ENCODE measurements at regions of chr7 and their contacts with region 1.

Region 1: DNA sequence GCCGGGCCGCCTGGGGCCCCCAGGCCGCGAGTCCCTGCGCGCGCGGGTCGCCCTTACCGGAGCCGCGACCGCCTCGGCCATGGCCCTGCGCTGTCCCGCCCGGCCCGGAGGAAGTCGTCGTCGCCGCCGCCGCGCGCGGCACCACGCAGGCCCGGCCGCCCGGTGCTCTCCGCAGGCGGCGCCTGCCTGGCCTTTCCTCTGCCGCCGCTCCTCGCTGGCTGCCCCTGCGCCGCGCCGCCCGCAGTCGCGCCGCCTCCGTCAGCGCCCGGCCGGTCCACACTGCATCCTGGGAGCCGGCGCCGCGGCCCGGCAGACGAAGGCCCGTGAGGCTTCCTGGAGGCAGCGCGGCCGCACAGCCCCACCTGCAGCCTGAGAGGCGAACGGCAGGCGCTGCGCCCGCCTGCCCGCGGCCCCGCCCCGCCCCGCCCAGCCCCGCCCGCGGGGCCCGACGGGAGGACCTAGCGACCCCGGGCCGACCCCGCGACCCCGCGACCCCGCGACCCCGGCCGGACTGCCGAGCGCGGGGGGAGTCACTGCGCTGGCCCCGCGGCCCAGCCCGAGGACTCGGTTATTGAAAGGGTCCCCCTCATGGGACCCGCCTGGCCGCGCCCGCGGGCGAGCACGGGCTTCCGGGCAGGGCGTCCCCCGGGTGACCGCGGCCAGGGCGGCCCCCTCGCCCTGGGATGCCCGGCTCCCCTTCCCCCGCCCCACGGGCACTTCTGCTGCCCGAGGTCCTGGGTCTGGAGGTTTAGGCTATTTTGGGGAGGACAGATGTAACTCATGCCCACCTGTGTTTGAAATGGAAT is at the start of gene ZNF746:
- DNase-seq: peak; percentile 78
- H3K4me3 ChIP-seq: peak within 1 kb of the TSS; percentile 74
- H3K27ac ChIP-seq: peak within 1 kb of the TSS; percentile 57
- H3K4me1 ChIP-seq: peaks cover 9% of the 10 kb centered on the region
- H3K27me3 ChIP-seq: no peaks in the 10 kb centered on the region
- CTCF ChIP-seq: no peak
- total RNA-seq, gene ZNF746: 12.2 to 14.5 TPM

Region 2: GRCh38 chr7:148334959-148335577 is 1162.6 kb before region 1 on chr7:
- intact Hi-C with region 1: no loop called
- DNase-seq: no peak
- H3K4me3 ChIP-seq: no peak overlapping the region
- H3K27ac ChIP-seq: no peak overlapping the region
- H3K4me1 ChIP-seq: no peaks in the 10 kb centered on the region
- H3K27me3 ChIP-seq: no peaks in the 10 kb centered on the region
- CTCF ChIP-seq: no peak

Region 3: DNA sequence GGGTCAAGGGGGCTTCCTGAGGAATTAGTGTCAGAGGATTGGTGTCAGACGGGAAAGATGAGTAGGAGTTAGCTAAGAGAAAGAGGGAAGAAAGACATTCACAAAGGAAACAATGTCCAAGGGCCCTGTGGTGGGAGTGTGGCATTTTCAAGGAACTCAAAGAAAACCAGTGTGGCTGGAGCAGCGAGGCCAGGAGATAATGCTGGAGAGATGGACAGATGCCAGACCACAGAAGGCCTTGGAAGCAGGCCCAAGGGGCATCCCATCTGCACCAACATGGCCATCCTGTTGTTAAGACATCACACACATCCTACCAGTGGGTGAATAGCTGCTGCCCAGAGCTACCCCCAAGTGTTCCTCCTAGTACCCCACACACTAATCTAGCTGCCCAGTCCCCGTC is 835.0 kb before region 1 on chr7:
- intact Hi-C with region 1: no loop called
- DNase-seq: no peak
- H3K4me3 ChIP-seq: no peak overlapping the region
- H3K27ac ChIP-seq: no peak overlapping the region
- H3K4me1 ChIP-seq: no peaks in the 10 kb centered on the region
- H3K27me3 ChIP-seq: no peaks in the 10 kb centered on the region
- CTCF ChIP-seq: no peak

Region 4: DNA sequence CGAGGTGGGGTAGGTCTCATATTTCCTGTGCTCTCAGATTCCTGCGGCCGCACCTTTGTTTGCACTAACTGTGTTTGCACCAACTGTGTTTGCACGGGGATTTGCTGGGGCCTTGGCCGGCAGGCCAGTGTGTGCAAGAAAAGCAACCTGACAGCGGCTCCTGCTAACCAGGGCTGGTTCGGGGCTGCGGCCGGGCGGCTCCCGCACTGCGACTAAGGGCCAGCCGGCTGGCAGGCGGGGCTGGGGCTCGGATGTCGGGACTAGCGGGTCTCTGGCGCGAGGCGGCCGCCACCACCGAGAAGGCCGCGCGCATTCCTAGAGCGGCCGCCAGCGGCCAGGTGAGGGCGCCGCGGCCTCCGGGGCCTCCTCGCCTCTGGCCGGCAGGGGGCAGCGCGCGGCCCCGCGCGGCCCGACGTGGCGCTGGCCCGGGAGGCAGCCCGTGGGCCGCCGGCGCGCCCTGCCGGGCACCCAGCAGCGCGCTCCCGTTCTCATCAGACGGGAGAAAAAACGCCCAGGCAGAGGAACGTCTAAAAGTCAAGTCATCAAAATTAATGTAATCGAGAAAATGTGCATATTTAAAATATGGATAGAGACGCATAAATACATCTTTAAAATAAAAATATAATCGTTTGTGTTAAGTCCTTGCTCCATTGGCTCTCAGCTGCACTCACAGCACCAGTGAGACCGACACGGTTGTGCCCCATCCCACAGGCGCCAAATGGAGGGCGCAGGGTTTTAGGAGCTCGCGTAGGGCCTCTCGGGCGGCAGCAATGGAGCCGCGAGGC is 75.3 kb before region 1 on chr7:
- intact Hi-C with region 1: loop called (anchors 5 kb)
- DNase-seq: peak; percentile 60
- H3K4me3 ChIP-seq: peak overlapping the region; percentile 55
- H3K27ac ChIP-seq: peak overlapping the region; percentile 56
- H3K4me1 ChIP-seq: no peaks in the 10 kb centered on the region
- H3K27me3 ChIP-seq: no peaks in the 10 kb centered on the region
- CTCF ChIP-seq: peak; percentile 35

Region 5: DNA sequence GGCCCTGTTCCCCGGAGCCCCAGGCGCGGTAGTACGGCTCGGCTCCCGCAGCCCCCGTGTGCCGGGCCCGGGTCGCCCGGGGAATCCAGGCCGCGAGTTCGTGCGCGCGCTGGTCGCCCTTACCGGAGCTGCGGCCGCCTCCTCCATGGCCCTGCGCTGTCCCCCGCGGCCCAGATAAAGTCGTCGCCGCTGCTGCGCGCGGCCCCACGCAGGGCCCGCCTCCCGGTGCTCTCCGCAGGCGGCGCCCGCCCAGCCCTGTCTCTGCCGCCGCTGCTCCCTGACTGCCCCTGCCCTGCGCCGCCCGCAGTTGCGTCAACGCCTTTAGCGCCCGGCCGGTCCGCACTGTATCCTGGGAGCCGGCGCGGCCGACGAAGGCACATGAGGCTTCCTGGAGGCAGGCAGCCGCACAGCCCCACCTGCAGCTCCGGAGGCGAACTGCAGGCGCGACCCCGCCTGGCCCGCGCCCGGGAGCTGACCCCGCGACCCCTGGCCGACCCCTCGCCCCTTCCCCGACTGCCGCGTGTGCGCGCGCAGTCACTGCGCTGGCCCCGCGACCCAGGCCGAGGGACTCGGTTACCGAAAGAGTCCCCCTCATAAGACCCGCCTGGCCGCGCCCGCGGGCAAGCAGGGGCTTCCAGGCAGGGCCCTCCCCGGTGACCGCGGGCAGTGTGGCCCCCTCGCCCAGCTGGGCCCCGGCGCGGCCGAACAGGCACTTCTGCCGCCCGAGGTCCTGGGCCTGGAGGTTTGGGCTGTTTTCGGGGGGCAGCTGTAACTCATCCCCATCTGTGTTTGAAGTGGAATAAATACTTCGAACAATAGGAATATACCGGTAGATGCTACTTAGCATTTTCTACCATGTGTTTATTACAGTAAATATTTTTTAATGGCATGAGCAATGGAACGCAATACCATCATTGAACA is 127.0 kb after region 1 on chr7:
- intact Hi-C with region 1: loop called (anchors 10 kb)
- DNase-seq: peak; percentile 93
- H3K4me3 ChIP-seq: peak overlapping the region; percentile 99
- H3K27ac ChIP-seq: peak overlapping the region; percentile 85
- H3K4me1 ChIP-seq: peaks cover 6% of the 10 kb centered on the region
- H3K27me3 ChIP-seq: no peaks in the 10 kb centered on the region
- CTCF ChIP-seq: peak; percentile 99